Activated CD4-positive, alpha-beta T cell treated with anti-CD3 and anti-CD28 coated beads, Interleukin-2, amount 10 ng/mL, durations not matched to agents 7 days and 5 days (primary cell): ENCODE measurements at regions of chr5 and their contacts with region 1.

Region 1: DNA sequence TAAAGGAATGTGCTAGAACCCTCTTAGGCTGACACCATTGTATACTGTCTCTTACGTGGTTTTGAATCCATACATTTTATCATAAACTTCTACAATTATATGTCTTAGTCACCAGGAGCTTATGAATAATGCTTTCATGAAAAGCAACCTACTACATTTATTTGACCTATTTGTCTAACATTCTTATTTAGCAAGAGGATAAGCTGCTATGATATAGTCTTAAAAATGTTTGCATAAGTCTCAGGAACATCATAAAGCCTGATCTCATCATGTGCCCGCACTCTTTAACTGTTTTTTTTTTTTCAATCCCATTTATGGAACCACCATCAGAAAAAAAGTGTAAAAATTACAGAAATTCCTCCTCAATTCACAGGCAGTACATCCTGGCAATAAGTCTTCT is 59.7 kb downstream of the CDH12 start:
- DNase-seq: no peak
- H3K4me3 Mint-ChIP-seq: no peak overlapping the region
- H3K27ac Mint-ChIP-seq: no peak overlapping the region
- H3K4me1 Mint-ChIP-seq: no peaks in the 10 kb centered on the region
- H3K27me3 Mint-ChIP-seq: no peaks in the 10 kb centered on the region

Region 2: GRCh38 chr5:22567983-22568382 is 225.5 kb before region 1 on chr5:
- CTCF ChIA-PET with region 1: interaction called, 10 read pairs
- POLR2A ChIA-PET with region 1: no interaction called
- DNase-seq: no peak
- H3K4me3 Mint-ChIP-seq: no peak overlapping the region
- H3K27ac Mint-ChIP-seq: no peak overlapping the region
- H3K4me1 Mint-ChIP-seq: no peaks in the 10 kb centered on the region
- H3K27me3 Mint-ChIP-seq: no peaks in the 10 kb centered on the region